Kidney (tissue), 22 donors: ENCODE measurements at regions of chr15 and their contacts with region 1.

Region 1: GRCh38 chr15:90320061-90320884 is 31.8 kb upstream of the ZNF774 start:
- DNase-seq: peak; percentile 90 to 97 (median 92)
- H3K4me3 ChIP-seq: peak overlapping the region in 1 of 3 donors; percentile 19
- H3K27ac ChIP-seq: no peak overlapping the region
- H3K4me1 ChIP-seq: peaks cover 0 to 3% (median 0%) of the 10 kb centered on the region in 3 donors
- H3K27me3 ChIP-seq: no peaks in the 10 kb centered on the region
- CTCF ChIP-seq: peak; percentile 100

Region 2: DNA sequence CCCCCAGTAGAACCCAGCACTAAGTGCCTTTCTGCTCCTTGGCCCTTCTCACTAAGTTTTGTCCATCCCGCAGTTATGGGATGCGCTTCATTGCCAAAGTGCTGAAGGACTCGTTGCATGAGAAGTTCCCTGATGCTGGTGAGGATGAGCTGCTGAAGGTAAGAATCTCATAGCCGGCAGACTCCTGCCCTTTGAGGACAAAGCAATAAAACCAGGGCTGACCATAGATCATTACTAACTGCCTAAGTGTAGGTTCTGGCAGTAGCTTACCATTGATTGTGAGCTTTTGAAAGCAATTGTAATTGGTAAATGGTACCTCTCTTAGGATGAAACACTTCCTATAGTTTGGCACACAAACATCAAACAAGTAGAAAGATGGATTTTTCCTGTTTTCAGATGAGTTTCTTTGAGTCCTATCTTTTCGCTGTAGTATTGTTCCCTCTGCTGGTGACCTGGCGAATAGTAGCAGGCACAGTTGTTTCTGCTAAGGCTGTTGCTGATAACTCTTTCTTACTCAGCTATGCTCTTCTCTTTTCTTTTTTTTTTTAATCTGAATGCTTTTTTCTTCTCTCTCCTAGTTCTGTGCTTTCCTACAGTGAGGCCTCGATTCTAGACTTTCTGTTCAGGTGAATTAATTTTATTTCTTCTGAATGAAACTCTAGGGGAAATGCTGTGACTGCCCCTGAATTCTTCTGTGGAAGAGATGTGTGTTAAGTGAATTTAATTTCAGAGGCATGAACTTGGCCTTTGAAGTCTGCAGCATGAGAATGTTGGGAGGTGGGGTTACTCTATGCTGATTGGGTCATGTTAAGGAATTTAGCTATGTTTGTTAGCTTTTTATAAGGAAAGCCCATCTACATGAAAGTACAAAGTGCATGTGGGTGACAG is 162.1 kb after region 1 on chr15:
- intact Hi-C with region 1: loop called (anchors 10 kb)
- DNase-seq: peak in 3 of 5 donors; percentile 61 to 77 (median 75)
- H3K4me3 ChIP-seq: no peak overlapping the region
- H3K27ac ChIP-seq: no peak overlapping the region
- H3K4me1 ChIP-seq: no peaks in the 10 kb centered on the region
- H3K27me3 ChIP-seq: no peaks in the 10 kb centered on the region
- CTCF ChIP-seq: peak; percentile 66